GM12878 (cell line): ENCODE measurements at regions of chr1 and their contacts with region 1.

Region 1: DNA sequence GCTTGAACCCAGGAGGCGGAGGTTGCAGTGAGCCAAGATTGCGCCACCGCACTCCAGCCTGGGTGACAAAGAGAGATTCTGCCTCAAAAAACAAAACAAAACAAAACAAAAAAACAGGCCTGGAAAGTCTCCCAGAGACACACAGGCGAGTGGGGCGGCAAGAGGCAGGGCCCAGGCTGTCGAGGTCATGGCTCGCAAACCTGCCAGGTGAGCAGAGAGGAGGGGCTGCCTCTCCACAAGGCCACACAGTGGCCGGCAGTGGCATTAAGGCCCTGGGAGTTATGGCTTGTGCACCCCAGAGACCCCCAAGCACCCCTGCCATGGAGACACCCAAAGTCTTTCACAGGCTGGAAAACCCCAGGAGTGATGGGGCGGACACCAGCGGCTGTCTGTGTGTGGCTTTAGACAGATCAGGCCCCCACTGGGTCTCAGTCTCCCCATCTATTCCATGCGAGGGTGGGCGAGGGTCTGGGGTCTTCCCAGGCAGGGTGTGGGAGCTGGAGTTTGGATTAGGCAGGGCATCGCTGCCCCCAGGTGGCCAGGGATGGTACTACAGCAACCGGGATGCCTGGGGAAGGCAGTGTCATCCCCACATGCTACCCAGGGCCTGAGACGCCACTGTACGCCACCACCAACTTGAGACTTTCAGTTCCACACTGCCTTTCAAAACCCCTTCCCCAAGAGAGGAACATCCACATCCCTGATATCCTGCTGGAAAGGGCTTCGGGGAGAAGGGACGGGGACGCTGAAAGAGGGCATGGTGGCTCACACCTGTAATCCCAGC is 7.3 kb upstream of the CTRC start:
- DNase-seq: no peak
- ATAC-seq: peak; percentile 85
- H3K4me3 ChIP-seq: no peak overlapping the region
- H3K27ac ChIP-seq: no peak overlapping the region
- H3K4me1 ChIP-seq: no peaks in the 10 kb centered on the region
- H3K27me3 ChIP-seq: no peaks in the 10 kb centered on the region
- CTCF ChIP-seq: peak; percentile 97 to 99 (median 98); a peak in 5 of 6 replicates
- EP300 ChIP-seq: no peak
- POLR2A ChIP-seq: peak; percentile 50
- RAD21 ChIP-seq: peak; percentile 85

Region 2: GRCh38 chr1:15315815-15316214 is 115.2 kb before region 1 on chr1:
- CTCF ChIA-PET with region 1: interaction called, 18 read pairs
- POLR2A ChIA-PET with region 1: no interaction called
- RAD21 ChIA-PET with region 1: interaction called, 3 read pairs
- SMC1A ChIA-PET with region 1: interaction called, 11 read pairs
- in situ Hi-C with region 1: no loop called
- intact Hi-C with region 1: no loop called
- DNase-seq: no peak
- ATAC-seq: no peak
- H3K4me3 ChIP-seq: no peak overlapping the region
- H3K27ac ChIP-seq: no peak overlapping the region
- H3K4me1 ChIP-seq: no peaks in the 10 kb centered on the region
- H3K27me3 ChIP-seq: peaks cover 0 to 2% of the 10 kb centered on the region in 2 experiments; a peak in 1 of 4 replicates
- CTCF ChIP-seq: no peak
- EP300 ChIP-seq: no peak
- POLR2A ChIP-seq: no peak
- RAD21 ChIP-seq: no peak

Region 3: DNA sequence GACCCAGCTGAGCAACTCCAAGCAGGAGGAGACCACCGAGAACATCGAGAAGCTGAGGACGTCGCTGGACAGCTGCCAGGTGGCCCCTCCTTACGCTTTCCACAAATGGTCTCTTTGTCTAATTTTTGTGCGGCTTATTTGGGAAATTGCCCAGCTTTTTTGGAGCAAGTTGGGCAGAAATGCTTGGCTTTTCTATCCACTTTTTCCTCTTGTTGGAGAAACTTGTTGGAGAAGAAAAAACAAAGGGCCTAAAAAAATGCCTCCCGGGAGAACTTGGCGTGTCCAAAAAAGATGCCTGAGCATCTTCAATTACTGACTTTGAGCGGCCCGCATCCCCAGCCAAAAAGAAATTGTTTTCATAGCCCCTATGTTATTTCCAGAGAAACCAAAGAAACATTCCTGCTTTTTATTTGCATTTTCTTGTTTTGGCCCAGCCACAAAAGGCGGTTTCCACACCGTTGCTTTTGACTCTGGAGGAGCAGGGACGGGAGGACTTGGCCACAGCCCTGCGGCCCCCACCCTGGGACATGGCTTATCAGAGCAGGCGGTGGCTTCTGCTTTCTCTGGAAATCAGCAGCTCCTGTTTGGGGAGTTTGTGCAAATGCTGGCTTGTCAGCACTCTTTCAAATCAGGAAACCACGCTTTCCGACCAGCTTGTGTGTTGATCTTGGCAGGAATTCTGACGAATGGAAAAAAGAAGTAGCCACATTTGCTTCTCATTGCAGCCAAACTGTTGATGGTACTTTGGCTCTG is 102.5 kb before region 1 on chr1:
- CTCF ChIA-PET with region 1: interaction called, 178 read pairs
- POLR2A ChIA-PET with region 1: interaction called, 4 read pairs
- RAD21 ChIA-PET with region 1: interaction called, 22 read pairs
- SMC1A ChIA-PET with region 1: interaction called, 64 read pairs
- in situ Hi-C with region 1: loop called (anchors 5 kb)
- intact Hi-C with region 1: loop called (anchors 1 kb)
- DNase-seq: no peak
- ATAC-seq: no peak
- H3K4me3 ChIP-seq: no peak overlapping the region
- H3K27ac ChIP-seq: no peak overlapping the region
- H3K4me1 ChIP-seq: no peaks in the 10 kb centered on the region
- H3K27me3 ChIP-seq: peaks cover 0 to 2% of the 10 kb centered on the region in 2 experiments; a peak in 1 of 4 replicates
- CTCF ChIP-seq: no peak
- EP300 ChIP-seq: no peak
- POLR2A ChIP-seq: no peak
- RAD21 ChIP-seq: no peak

Region 4: DNA sequence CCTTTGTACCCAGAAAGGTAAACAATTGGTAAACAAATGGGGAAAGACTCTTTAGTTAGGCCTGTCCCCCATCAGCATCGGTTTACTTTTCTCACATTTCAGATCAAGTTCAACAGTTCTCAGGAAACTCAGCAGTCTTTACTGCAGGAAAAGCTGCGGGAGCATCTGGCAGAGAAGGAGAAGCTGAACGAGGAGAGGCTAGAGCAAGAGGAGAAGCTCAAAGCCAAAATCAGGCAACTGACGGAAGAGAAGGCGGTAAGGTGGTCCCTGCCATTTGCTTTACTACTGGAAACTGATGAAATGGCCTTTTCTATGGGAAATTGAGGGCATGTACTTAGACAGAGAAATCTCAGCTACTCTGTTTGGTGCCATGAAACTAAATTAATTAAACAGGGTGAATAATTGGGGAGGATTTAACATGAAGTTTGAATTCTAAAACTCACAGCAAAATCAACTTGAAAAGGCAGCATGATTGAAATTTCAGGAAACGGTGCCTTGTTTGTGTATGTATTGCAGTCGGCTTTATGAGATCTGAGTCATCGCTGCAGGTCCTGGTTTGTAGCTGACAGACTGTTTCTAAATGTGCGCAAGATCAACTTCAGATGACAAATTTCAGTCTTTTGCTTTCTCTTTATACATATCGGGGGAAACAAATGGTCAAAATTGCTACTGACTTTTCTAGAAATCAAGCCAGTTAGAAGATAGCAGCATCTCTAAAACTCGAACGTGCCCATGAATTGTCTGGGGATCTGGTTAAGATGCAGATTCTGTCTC is 89.2 kb before region 1 on chr1:
- CTCF ChIA-PET with region 1: interaction called, 11 read pairs
- POLR2A ChIA-PET with region 1: no interaction called
- RAD21 ChIA-PET with region 1: no interaction called
- SMC1A ChIA-PET with region 1: interaction called, 3 read pairs
- in situ Hi-C with region 1: no loop called
- intact Hi-C with region 1: no loop called
- DNase-seq: no peak
- ATAC-seq: no peak
- H3K4me3 ChIP-seq: no peak overlapping the region
- H3K27ac ChIP-seq: no peak overlapping the region
- H3K4me1 ChIP-seq: peaks cover 19% of the 10 kb centered on the region
- H3K27me3 ChIP-seq: no peaks in the 10 kb centered on the region
- CTCF ChIP-seq: no peak
- EP300 ChIP-seq: no peak
- POLR2A ChIP-seq: no peak
- RAD21 ChIP-seq: no peak

Region 5: GRCh38 chr1:15411593-15412137 is 19.3 kb before region 1 on chr1:
- CTCF ChIA-PET with region 1: interaction called, 14 read pairs
- POLR2A ChIA-PET with region 1: no interaction called
- RAD21 ChIA-PET with region 1: interaction called, 10 read pairs
- SMC1A ChIA-PET with region 1: interaction called, 3 read pairs
- in situ Hi-C with region 1: no loop called
- intact Hi-C with region 1: no loop called
- DNase-seq: no peak
- ATAC-seq: peak; percentile 69
- H3K4me3 ChIP-seq: peak overlapping the region; percentile 97
- H3K27ac ChIP-seq: peak overlapping the region; percentile 75
- H3K4me1 ChIP-seq: peaks cover 37% of the 10 kb centered on the region
- H3K27me3 ChIP-seq: peaks cover 0 to 3% of the 10 kb centered on the region in 2 experiments; a peak in 1 of 4 replicates
- CTCF ChIP-seq: no peak
- EP300 ChIP-seq: 0 out of 4 replicates have a peak, but pooled peaks of 1 of the 2 experiments have one; percentile 9
- POLR2A ChIP-seq: peak; percentile 43; the same call in 1 of the 2 replicates
- RAD21 ChIP-seq: no peak

Region 6: GRCh38 chr1:15417365-15417934 is 13.5 kb before region 1 on chr1:
- CTCF ChIA-PET with region 1: interaction called, 14 read pairs
- POLR2A ChIA-PET with region 1: no interaction called
- RAD21 ChIA-PET with region 1: interaction called, 10 read pairs
- SMC1A ChIA-PET with region 1: interaction called, 3 read pairs
- in situ Hi-C with region 1: no loop called
- intact Hi-C with region 1: no loop called
- DNase-seq: no peak
- ATAC-seq: peak; percentile 47
- H3K4me3 ChIP-seq: peak overlapping the region; percentile 58
- H3K27ac ChIP-seq: peak overlapping the region; percentile 91
- H3K4me1 ChIP-seq: peaks cover 47% of the 10 kb centered on the region
- H3K27me3 ChIP-seq: no peaks in the 10 kb centered on the region
- CTCF ChIP-seq: no peak
- EP300 ChIP-seq: peak in 1 of 2 experiments; percentile 82; a peak in 2 of 4 replicates
- POLR2A ChIP-seq: no peak
- RAD21 ChIP-seq: no peak

Region 7: GRCh38 chr1:15559294-15559761 is 128.3 kb after region 1 on chr1:
- CTCF ChIA-PET with region 1: no interaction called
- POLR2A ChIA-PET with region 1: no interaction called
- RAD21 ChIA-PET with region 1: no interaction called
- SMC1A ChIA-PET with region 1: no interaction called
- in situ Hi-C with region 1: no loop called
- intact Hi-C with region 1: no loop called
- DNase-seq: no peak
- ATAC-seq: no peak
- H3K4me3 ChIP-seq: no peak overlapping the region
- H3K27ac ChIP-seq: no peak overlapping the region
- H3K4me1 ChIP-seq: peaks cover 4% of the 10 kb centered on the region
- H3K27me3 ChIP-seq: no peaks in the 10 kb centered on the region
- CTCF ChIP-seq: no peak
- EP300 ChIP-seq: no peak
- POLR2A ChIP-seq: no peak
- RAD21 ChIP-seq: no peak

Region 8: GRCh38 chr1:15592285-15592684 is 161.3 kb after region 1 on chr1:
- CTCF ChIA-PET with region 1: no interaction called
- POLR2A ChIA-PET with region 1: no interaction called
- RAD21 ChIA-PET with region 1: no interaction called
- SMC1A ChIA-PET with region 1: no interaction called
- in situ Hi-C with region 1: no loop called
- intact Hi-C with region 1: no loop called
- DNase-seq: no peak
- ATAC-seq: no peak
- H3K4me3 ChIP-seq: no peak overlapping the region
- H3K27ac ChIP-seq: no peak overlapping the region
- H3K4me1 ChIP-seq: no peaks in the 10 kb centered on the region
- H3K27me3 ChIP-seq: no peaks in the 10 kb centered on the region
- CTCF ChIP-seq: no peak
- EP300 ChIP-seq: no peak
- POLR2A ChIP-seq: no peak
- RAD21 ChIP-seq: no peak

Region 9: GRCh38 chr1:15734891-15735300 is 303.9 kb after region 1 on chr1:
- CTCF ChIA-PET with region 1: no interaction called
- POLR2A ChIA-PET with region 1: no interaction called
- RAD21 ChIA-PET with region 1: no interaction called
- SMC1A ChIA-PET with region 1: no interaction called
- in situ Hi-C with region 1: no loop called
- intact Hi-C with region 1: loop called (anchors 5 kb)
- DNase-seq: no peak
- ATAC-seq: no peak
- H3K4me3 ChIP-seq: no peak overlapping the region
- H3K27ac ChIP-seq: no peak overlapping the region
- H3K4me1 ChIP-seq: no peaks in the 10 kb centered on the region
- H3K27me3 ChIP-seq: no peaks in the 10 kb centered on the region
- CTCF ChIP-seq: no peak
- EP300 ChIP-seq: no peak
- POLR2A ChIP-seq: no peak; the same call in 1 of the 2 replicates
- RAD21 ChIP-seq: no peak